GM12878 (cell line): ENCODE measurements at regions of chr17 and their contacts with region 1.

Region 1: GRCh38 chr17:75855310-75856081 is at the start of gene WBP2:
- DNase-seq: peak; percentile 100
- ATAC-seq: peak; percentile 92
- H3K4me3 ChIP-seq: peak within 1 kb of the TSS; percentile 79
- H3K27ac ChIP-seq: peak within 1 kb of the TSS; percentile 93
- H3K4me1 ChIP-seq: peaks cover 23% of the 10 kb centered on the region
- H3K27me3 ChIP-seq: no peaks in the 10 kb centered on the region
- CTCF ChIP-seq: peak; percentile 49 to 53 (median 52); a peak in 4 of 6 replicates
- EP300 ChIP-seq: no peak
- POLR2A ChIP-seq: peak; percentile 98
- RAD21 ChIP-seq: peak; percentile 64
- polyA plus RNA-seq, gene WBP2: 1.5 to 3.0 TPM

Region 2: GRCh38 chr17:75764711-75765421 is 90.6 kb before region 1 on chr17 and contains the start of gene GALK1:
- CTCF ChIA-PET with region 1: interaction called, 5 read pairs
- POLR2A ChIA-PET with region 1: interaction called, 15 read pairs
- RAD21 ChIA-PET with region 1: interaction called, 16 read pairs
- SMC1A ChIA-PET with region 1: interaction called, 4 read pairs
- in situ Hi-C with region 1: no loop called
- intact Hi-C with region 1: no loop called
- DNase-seq: no peak
- ATAC-seq: peak; percentile 96
- H3K4me3 ChIP-seq: peak within 1 kb of the TSS; percentile 76; the same call in 1 of the 2 replicates
- H3K27ac ChIP-seq: peak within 1 kb of the TSS; percentile 48; the same call in 1 of the 2 replicates
- H3K4me1 ChIP-seq: peaks cover 12% of the 10 kb centered on the region
- H3K27me3 ChIP-seq: no peaks in the 10 kb centered on the region
- CTCF ChIP-seq: peak; percentile 49 to 83 (median 78)
- EP300 ChIP-seq: no peak
- POLR2A ChIP-seq: peak; percentile 83
- RAD21 ChIP-seq: peak; percentile 49
- polyA plus RNA-seq, gene GALK1: 0.21 to 5.9 TPM

Region 3: DNA sequence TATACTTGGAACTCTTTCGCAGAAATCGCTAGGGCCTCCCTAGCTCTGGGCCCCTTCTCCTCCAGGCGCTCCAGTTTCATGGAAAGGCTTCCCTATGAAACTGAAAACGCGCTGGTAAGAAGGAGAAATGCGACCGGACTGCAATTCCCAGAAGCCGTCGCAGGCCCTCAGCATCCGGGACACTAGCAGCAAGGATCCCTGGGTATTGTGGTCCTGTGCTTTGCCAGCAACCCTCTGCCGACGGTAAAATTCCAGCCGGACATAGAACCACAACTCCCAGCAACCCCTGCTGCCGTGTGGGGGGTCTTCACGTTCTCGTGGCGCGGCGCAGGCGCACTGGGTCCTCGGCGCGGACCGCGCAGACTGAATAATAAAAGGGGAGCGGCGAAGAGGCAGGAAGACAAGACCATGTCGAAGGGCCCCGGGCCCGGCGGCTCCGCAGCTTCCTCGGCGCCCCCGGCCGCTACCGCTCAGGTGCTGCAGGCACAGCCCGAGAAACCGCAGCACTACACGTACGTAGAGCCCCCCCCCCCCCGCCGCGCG is 71.0 kb before region 1 on chr17 and contains the start of gene UNK:
- CTCF ChIA-PET with region 1: interaction called, 8 read pairs
- POLR2A ChIA-PET with region 1: interaction called, 30 read pairs
- RAD21 ChIA-PET with region 1: interaction called, 13 read pairs
- SMC1A ChIA-PET with region 1: interaction called, 11 read pairs
- in situ Hi-C with region 1: no loop called
- intact Hi-C with region 1: loop called (anchors 2 kb)
- DNase-seq: peak; percentile 96
- ATAC-seq: peak; percentile 80
- H3K4me3 ChIP-seq: peak within 1 kb of the TSS; percentile 79
- H3K27ac ChIP-seq: peak within 1 kb of the TSS; percentile 97
- H3K4me1 ChIP-seq: peaks cover 22% of the 10 kb centered on the region
- H3K27me3 ChIP-seq: no peaks in the 10 kb centered on the region
- CTCF ChIP-seq: no peak
- EP300 ChIP-seq: no peak
- POLR2A ChIP-seq: no peak
- RAD21 ChIP-seq: no peak
- polyA plus RNA-seq, gene UNK: 8.9 to 11.9 TPM

Region 4: DNA sequence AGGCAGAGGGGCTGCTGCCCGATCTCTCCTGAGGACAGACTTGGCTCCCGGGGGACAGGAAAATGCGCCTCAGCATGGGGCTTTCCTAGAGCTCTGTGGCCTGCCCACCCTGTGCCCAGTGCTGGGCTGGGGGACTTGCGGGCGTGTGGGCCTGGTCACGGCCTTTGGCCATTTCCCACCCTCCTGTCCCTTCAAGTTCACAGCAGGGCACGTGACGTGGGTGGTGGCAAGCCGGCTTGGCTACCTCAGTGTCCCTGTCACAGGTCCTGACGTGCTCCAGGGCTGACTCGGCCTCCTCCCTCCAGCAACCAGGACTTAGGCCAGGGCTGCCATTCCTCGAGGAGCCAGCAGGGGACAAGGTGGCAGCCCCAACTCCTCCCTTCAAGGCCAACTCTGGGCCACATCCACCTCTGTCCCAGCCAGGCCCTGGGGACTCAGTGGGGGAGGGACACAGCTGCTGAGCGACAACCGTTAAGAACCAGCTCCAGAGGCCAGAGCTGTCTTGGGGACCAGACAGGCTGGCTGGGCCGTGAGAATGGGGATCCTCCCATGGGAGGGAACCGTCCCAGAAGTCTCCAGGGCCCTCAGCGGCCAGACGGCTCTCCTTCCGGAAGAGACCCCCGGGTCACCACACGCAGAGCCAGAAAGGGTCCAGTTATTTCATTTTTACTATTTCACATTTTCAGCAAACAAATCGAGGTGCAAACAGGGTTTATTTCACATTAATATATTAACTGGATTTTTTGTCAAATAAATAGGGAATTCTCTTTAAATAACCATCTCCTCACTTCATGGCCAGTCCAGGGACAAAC is 10.2 kb before region 1 on chr17:
- CTCF ChIA-PET with region 1: interaction called, 117 read pairs
- POLR2A ChIA-PET with region 1: interaction called, 42 read pairs
- RAD21 ChIA-PET with region 1: interaction called, 21 read pairs
- SMC1A ChIA-PET with region 1: interaction called, 18 read pairs
- in situ Hi-C with region 1: no loop called
- intact Hi-C with region 1: no loop called
- DNase-seq: peak; percentile 81
- ATAC-seq: peak; percentile 89
- H3K4me3 ChIP-seq: peak overlapping the region; percentile 77; the same call in 1 of the 2 replicates
- H3K27ac ChIP-seq: peak overlapping the region; percentile 93
- H3K4me1 ChIP-seq: peaks cover 14% of the 10 kb centered on the region
- H3K27me3 ChIP-seq: no peaks in the 10 kb centered on the region
- CTCF ChIP-seq: peak; percentile 71 to 92 (median 89)
- EP300 ChIP-seq: 0 out of 4 replicates have a peak, but pooled peaks of 1 of the 2 experiments have one; percentile 20
- POLR2A ChIP-seq: peak; percentile 59; the same call in 1 of the 2 replicates
- RAD21 ChIP-seq: peak; percentile 50

Region 5: GRCh38 chr17:75896415-75897159 is 41.1 kb after region 1 on chr17 and contains the start of gene TRIM65:
- CTCF ChIA-PET with region 1: interaction called, 24 read pairs
- POLR2A ChIA-PET with region 1: interaction called, 19 read pairs
- RAD21 ChIA-PET with region 1: interaction called, 32 read pairs
- SMC1A ChIA-PET with region 1: interaction called, 8 read pairs
- in situ Hi-C with region 1: no loop called
- intact Hi-C with region 1: loop called (anchors 5 kb)
- DNase-seq: no peak
- ATAC-seq: peak; percentile 91
- H3K4me3 ChIP-seq: peak within 1 kb of the TSS; percentile 89
- H3K27ac ChIP-seq: peak within 1 kb of the TSS; percentile 72
- H3K4me1 ChIP-seq: peaks cover 6% of the 10 kb centered on the region
- H3K27me3 ChIP-seq: no peaks in the 10 kb centered on the region
- CTCF ChIP-seq: peak; percentile 27 to 74 (median 39); a peak in 4 of 6 replicates
- EP300 ChIP-seq: no peak
- POLR2A ChIP-seq: peak; percentile 93
- RAD21 ChIP-seq: peak; percentile 38; the same call in 1 of the 2 replicates
- polyA plus RNA-seq, gene TRIM65: 1.4 to 3.8 TPM

Region 6: DNA sequence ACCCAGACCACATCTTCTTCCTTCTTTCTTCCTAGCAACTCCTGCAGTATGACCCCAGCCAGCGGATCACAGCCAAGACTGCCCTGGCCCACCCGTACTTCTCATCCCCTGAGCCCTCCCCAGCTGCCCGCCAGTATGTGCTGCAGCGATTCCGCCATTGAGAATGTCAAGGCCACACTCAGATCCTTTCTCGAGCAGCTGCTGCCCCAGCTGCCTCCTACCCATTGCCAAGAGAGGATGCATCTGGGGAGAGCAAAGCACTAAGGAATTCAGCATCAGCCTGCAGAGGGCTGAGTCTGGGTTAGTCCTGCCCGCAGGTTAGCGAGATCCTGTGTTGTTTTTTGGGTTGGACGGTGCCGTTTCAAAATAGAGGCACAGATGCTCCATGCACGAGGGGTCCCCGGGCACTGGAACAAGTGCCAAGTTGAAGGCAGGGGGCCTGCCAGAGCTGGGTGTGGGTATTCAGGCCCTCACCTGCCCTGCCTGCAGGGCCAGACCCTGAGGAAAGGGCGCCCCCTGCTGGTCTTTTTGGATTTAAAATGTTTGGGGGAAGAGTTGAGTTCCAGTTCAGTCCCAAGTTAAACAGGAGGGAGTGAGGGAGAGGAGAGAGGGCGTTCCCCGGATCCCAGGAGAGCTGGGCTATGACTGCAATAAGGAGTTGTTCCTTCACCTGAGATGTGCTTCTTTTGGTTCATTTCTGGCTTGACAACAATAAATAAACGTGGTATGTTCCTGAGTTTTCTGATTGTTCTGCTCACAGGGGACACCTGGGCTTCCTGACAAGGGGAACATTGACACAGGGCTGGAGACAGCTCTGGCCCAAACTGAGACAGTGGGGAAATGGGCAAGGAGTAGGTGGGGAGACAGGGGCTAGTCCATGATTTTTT is 150.0 kb after region 1 on chr17:
- CTCF ChIA-PET with region 1: interaction called, 10 read pairs
- POLR2A ChIA-PET with region 1: interaction called, 3 read pairs
- RAD21 ChIA-PET with region 1: interaction called, 4 read pairs
- SMC1A ChIA-PET with region 1: no interaction called
- in situ Hi-C with region 1: no loop called
- intact Hi-C with region 1: no loop called
- DNase-seq: no peak
- ATAC-seq: peak; percentile 95
- H3K4me3 ChIP-seq: no peak overlapping the region
- H3K27ac ChIP-seq: no peak overlapping the region
- H3K4me1 ChIP-seq: no peaks in the 10 kb centered on the region
- H3K27me3 ChIP-seq: no peaks in the 10 kb centered on the region
- CTCF ChIP-seq: peak; percentile 63 to 85 (median 65)
- EP300 ChIP-seq: no peak
- POLR2A ChIP-seq: no peak
- RAD21 ChIP-seq: peak; percentile 97

Region 7: DNA sequence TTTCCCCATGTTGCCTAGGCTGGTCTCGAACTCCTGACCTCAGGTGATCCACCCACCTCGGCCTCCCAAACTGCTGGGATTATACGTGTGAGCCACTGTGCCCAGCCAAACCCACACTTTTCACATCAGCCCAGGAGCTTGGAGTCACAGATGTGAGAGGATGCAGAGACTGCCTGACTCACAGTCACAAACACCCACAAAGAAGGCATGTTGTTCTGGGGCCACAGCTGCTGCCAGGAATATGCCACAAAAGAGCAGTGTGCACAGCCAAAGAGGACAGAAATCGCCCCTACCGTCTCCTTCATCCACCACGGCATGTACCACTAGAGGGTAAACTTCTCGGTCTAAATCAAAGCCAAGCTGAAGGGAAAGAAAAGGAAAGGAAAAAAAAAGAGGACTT is 310.7 kb after region 1 on chr17:
- CTCF ChIA-PET with region 1: no interaction called
- POLR2A ChIA-PET with region 1: no interaction called
- RAD21 ChIA-PET with region 1: no interaction called
- SMC1A ChIA-PET with region 1: no interaction called
- in situ Hi-C with region 1: no loop called
- intact Hi-C with region 1: no loop called
- DNase-seq: no peak
- ATAC-seq: no peak
- H3K4me3 ChIP-seq: no peak overlapping the region
- H3K27ac ChIP-seq: no peak overlapping the region
- H3K4me1 ChIP-seq: no peaks in the 10 kb centered on the region
- H3K27me3 ChIP-seq: no peaks in the 10 kb centered on the region
- CTCF ChIP-seq: no peak
- EP300 ChIP-seq: no peak
- POLR2A ChIP-seq: no peak
- RAD21 ChIP-seq: no peak